ENCODE measurements at regions of chr6 and their contacts with region 1.

Region 1: DNA sequence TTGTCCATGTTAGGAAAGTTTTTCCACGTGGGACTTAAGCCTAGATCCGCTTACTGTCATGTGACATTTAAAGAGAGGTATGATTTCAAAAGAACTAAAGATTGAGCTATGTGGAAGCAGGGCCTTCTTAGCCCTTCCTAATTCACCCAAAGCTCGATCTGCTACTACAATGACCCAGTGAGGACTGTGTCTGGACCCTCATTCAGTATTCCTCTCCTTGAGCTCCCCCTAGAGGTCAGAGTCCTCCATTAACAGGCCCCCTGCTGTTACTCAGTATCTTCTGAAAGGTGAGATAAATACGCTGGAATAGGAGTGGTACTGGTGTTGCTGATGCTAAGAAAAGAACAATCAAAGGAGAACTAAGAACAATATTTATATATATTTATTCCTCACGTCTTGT is 414.0 kb downstream of the GJA1 start:
- DNase-seq: peak; percentile 88
- H3K4me3 ChIP-seq: no peak overlapping the region
- H3K27ac ChIP-seq: no peak overlapping the region
- H3K4me1 ChIP-seq: no peaks in the 10 kb centered on the region
- H3K27me3 ChIP-seq: no peaks in the 10 kb centered on the region
- CTCF ChIP-seq: peak; percentile 75 to 87
- POLR2A ChIP-seq: no peak

Region 2: GRCh38 chr6:121436960-121437850 is 412.3 kb before region 1 on chr6:
- CTCF ChIA-PET with region 1: interaction called, 108 read pairs
- POLR2A ChIA-PET with region 1: interaction called, 8 read pairs
- dilution Hi-C with region 1: no loop called
- intact Hi-C with region 1: loop called (anchors 1 kb)
- DNase-seq: peak; percentile 82
- H3K4me3 ChIP-seq: peak overlapping the region; percentile 94 to 100 (median 100)
- H3K27ac ChIP-seq: peak overlapping the region; percentile 99
- H3K4me1 ChIP-seq: peaks cover 31% of the 10 kb centered on the region
- H3K27me3 ChIP-seq: no peaks in the 10 kb centered on the region
- CTCF ChIP-seq: no peak
- POLR2A ChIP-seq: peak; percentile 60

Region 3: DNA sequence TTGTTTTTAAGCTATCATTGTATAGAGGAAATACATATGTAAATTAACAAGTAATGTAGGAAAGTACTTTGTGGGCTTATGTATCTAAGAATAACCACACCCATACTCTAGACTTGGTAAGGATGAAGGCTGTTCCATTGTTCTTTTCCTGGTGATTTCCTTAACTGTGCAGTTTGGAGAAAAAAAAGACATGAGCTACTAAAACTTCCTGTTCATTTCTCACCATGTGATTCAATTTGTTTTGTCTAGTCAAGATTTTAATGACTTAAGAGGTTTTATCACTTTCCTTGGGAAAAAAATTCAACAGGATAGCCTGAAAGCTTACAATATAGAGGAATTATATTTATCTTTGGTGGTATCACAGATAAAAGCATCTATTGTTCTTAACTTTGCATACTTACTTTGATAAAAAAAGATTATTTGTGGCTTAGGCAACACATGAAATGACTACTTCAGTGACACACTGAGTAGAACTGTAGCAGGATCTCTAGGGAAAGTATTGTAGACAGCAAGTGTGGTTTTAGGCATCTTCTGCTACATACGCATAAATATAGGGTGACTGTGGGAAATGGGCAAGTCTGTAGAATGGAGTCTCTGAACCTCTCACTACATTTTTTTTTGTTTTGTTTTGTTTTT is 333.7 kb before region 1 on chr6:
- CTCF ChIA-PET with region 1: interaction called, 10 read pairs
- POLR2A ChIA-PET with region 1: interaction called, 3 read pairs
- dilution Hi-C with region 1: no loop called
- intact Hi-C with region 1: no loop called
- DNase-seq: peak; percentile 93
- H3K4me3 ChIP-seq: no peak overlapping the region
- H3K27ac ChIP-seq: peak overlapping the region; percentile 90
- H3K4me1 ChIP-seq: peaks cover 46% of the 10 kb centered on the region
- H3K27me3 ChIP-seq: no peaks in the 10 kb centered on the region
- CTCF ChIP-seq: no peak
- POLR2A ChIP-seq: peak; percentile 36

Region 4: DNA sequence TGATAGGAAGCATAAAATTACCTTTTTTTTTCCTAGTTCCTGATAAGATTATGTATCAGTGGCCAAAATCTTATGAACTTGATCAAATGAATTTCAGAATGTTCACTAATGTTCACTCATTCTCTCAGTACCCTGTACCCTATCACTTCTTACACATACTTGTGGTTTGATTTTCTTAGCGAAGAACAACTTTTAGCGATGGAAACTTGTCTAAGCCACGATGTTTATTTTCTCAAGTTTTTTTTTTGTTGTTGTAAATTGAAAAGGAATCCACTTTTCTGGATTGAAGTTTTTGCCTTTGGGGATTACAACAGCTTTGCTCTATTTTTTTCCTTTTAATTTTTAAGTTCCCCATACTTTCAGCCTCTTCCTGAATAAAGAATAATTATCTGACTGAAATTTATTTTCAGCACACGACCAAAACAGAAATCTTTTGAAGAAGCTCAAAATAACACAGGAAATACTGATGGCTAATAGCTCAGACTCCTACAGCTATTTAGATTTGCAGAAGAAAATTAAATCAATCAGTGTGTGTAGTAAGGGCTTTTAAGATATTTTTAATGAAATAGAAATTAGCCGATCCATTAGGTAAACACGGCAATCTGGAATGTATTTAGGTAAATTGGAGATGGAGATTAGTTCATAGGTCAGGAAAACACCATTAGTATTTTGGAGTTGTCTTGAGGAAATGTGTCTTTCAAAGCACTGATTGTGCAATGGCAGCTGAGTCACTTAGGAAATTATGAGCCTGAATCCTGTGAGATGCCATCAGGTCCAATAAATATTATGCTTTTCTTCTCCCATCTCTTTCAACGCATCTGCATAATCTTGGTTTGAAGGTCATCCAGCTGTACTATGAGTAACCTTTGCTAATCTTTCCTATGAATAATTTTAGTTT is 196.5 kb before region 1 on chr6:
- CTCF ChIA-PET with region 1: interaction called, 14 read pairs
- POLR2A ChIA-PET with region 1: no interaction called
- dilution Hi-C with region 1: no loop called
- intact Hi-C with region 1: loop called (anchors 1 kb)
- DNase-seq: peak; percentile 96
- H3K4me3 ChIP-seq: peak overlapping the region in 1 of 3 experiments; percentile 57
- H3K27ac ChIP-seq: peak overlapping the region; percentile 98
- H3K4me1 ChIP-seq: peaks cover 51% of the 10 kb centered on the region
- H3K27me3 ChIP-seq: no peaks in the 10 kb centered on the region
- CTCF ChIP-seq: no peak
- POLR2A ChIP-seq: peak; percentile 29

Region 5: GRCh38 chr6:121838842-121839241 is 10.6 kb before region 1 on chr6:
- CTCF ChIA-PET with region 1: interaction called, 13 read pairs
- POLR2A ChIA-PET with region 1: no interaction called
- dilution Hi-C with region 1: no loop called
- intact Hi-C with region 1: no loop called
- DNase-seq: no peak
- H3K4me3 ChIP-seq: no peak overlapping the region
- H3K27ac ChIP-seq: no peak overlapping the region
- H3K4me1 ChIP-seq: peaks cover 3% of the 10 kb centered on the region
- H3K27me3 ChIP-seq: no peaks in the 10 kb centered on the region
- CTCF ChIP-seq: no peak
- POLR2A ChIP-seq: no peak

Region 6: DNA sequence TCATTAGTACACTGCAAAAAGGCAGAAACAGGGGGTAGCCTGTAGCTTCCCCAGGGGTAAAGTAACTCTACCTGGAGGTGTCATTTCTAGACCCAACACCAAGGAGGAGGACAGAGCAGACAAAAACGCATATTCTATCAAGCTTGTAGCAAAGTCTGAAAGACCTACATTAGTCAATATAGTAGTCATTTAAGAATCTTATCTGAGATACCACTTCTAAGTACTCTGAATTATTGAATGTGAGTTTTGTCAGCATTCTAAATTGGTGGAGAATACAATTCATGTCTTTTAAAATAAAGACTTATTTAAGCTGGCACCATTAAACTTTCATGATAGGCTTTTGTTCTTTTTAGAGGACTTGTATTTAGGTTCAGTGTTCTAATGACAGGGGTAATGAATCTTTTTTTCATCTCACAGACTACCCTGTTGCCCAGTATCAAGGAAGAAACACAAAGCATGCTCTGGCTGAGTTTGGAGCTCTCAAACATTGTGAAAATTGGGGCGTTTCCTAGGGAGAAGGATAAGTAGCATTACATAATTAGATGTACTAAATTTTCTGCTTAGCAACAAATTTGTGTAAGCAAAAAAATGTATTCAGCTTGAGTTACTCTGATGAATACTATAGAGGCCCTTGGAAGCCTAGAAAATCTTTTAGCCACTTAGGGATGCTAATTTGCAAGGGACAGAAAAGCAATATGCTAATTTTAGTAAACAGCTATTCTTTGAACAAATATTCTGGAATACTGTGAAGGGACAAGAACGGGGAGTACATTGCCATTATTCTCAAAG is 294.5 kb after region 1 on chr6:
- CTCF ChIA-PET with region 1: no interaction called
- POLR2A ChIA-PET with region 1: no interaction called
- dilution Hi-C with region 1: no loop called
- intact Hi-C with region 1: no loop called
- DNase-seq: no peak
- H3K4me3 ChIP-seq: no peak overlapping the region
- H3K27ac ChIP-seq: no peak overlapping the region
- H3K4me1 ChIP-seq: no peaks in the 10 kb centered on the region
- H3K27me3 ChIP-seq: no peaks in the 10 kb centered on the region
- CTCF ChIP-seq: no peak
- POLR2A ChIP-seq: no peak

Measured in endothelial cell of umbilical vein (primary cell).